CD4-positive, alpha-beta memory T cell (primary cell): ENCODE measurements at regions of chr6 and their contacts with region 1.

Region 1: GRCh38 chr6:149264629-149265028 is 52.9 kb upstream of the TAB2 start:
- DNase-seq: peak; percentile 48 to 64 (median 55)
- H3K4me3 ChIP-seq: peak overlapping the region in 1 of 2 donors; percentile 8
- H3K4me3 Mint-ChIP-seq: peak overlapping the region in 6 of 8 donors; percentile 2 to 74 (median 58)
- H3K27ac ChIP-seq: no peak overlapping the region
- H3K27ac Mint-ChIP-seq: peak overlapping the region in 6 of 7 donors; percentile 20 to 86 (median 58)
- H3K4me1 ChIP-seq: peaks cover 42% of the 10 kb centered on the region
- H3K4me1 Mint-ChIP-seq: peaks cover 21 to 51% (median 35%) of the 10 kb centered on the region in 4 donors
- H3K27me3 ChIP-seq: no peaks in the 10 kb centered on the region
- H3K27me3 Mint-ChIP-seq: no peaks in the 10 kb centered on the region

Region 2: DNA sequence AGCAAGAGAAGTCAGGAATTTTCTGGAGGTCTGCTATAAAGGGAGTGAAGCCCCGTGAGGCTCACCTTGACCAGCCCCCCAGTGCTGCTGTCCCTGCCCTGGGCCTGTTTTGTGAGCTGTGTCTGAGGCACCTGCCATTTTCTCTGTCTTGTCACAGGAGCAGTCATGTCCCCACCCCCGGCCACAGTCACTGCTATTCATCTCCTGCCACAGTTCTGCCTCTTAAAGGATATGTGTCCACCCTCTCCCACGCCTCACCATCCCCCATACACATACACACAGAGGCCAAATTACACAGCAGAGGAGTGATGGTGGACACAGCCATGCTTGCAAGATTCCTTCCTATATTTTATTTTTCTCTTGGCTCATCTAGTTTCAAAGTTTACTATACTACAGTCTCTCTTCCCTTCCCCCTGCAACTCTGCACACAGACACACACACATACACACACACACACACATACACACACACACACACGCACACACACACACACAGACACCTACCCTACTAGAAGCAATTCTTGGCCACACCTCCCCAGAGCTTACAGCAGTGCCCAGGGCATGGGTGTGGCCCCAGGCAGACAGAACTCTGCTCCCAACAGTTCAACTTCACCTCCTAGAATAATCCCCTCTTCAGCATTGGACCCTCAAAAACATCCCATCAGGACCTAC is 15.8 kb before region 1 on chr6:
- CTCF ChIA-PET with region 1: interaction called, 3 read pairs
- POLR2A ChIA-PET with region 1: interaction called, 6 read pairs
- intact Hi-C with region 1: loop called (anchors 2 kb)
- DNase-seq: peak in 3 of 5 donors; percentile 24 to 56 (median 46)
- H3K4me3 ChIP-seq: no peak overlapping the region
- H3K4me3 Mint-ChIP-seq: peak overlapping the region in 6 of 8 donors; percentile 19 to 68 (median 32)
- H3K27ac ChIP-seq: no peak overlapping the region
- H3K27ac Mint-ChIP-seq: peak overlapping the region in 5 of 7 donors; percentile 2 to 68 (median 37)
- H3K4me1 ChIP-seq: peaks cover 18% of the 10 kb centered on the region
- H3K4me1 Mint-ChIP-seq: peaks cover 17 to 31% (median 19%) of the 10 kb centered on the region in 4 donors
- H3K27me3 ChIP-seq: no peaks in the 10 kb centered on the region
- H3K27me3 Mint-ChIP-seq: peaks cover 0 to under 1% of the 10 kb centered on the region in 2 donors